CD14-positive monocyte (primary cell): ENCODE measurements at regions of chr17 and their contacts with region 1.

Region 1: DNA sequence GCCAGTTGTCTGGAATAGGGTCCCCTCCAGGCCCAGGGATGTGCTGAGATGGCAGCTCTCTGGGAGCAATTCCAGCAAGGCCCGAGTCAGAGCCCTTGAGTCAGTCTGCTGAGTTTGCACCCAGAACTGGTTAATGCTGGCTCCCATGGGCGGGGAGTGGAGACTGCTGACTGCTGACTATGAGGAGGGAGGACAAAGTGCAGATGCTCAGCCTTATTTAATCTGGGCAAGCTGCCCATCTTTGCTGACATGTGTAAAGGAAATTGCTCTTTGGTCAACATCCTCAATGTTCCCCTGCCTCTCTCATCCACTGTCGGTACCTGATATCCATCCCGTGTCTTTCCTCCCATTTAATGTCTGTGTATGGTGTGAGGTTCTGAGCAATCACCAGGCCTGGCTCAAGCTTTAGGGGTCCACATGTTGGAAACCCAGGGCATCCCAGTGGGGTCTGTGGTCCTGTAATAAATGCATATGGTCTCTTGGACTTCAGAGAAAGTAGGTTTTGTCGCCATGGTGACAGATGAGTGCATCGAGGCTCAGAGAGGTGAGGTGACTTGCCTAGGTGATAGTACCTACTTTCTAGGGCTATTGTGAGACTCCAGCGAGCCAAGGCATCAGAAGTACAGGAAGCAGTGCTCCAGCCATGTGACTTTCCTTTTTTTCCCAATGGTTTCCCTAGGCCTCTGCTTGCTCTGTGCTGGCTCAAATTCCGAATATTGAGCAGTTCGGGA is 20.0 kb upstream of the RNF135 start:
- DNase-seq: peak; percentile 73 to 77 (median 76)
- H3K4me3 ChIP-seq: peak overlapping the region in 1 of 3 experiments; percentile 18
- H3K4me3 Mint-ChIP-seq: peak overlapping the region in 1 of 2 donors; percentile 48
- H3K27ac ChIP-seq: peak overlapping the region; percentile 78 to 80
- H3K27ac Mint-ChIP-seq: peak overlapping the region; percentile 80 to 99 (median 90)
- H3K4me1 ChIP-seq: peaks cover 73% of the 10 kb centered on the region in 2 donors
- H3K4me1 Mint-ChIP-seq: peaks cover 64% of the 10 kb centered on the region
- H3K27me3 ChIP-seq: no peaks in the 10 kb centered on the region
- H3K27me3 Mint-ChIP-seq: peaks cover 0 to 5% (median 2%) of the 10 kb centered on the region in 3 donors
- CTCF ChIP-seq: no peak

Region 2: GRCh38 chr17:30805944-30806456 is 144.8 kb before region 1 on chr17:
- intact Hi-C with region 1: no loop called
- DNase-seq: peak in 1 of 3 donors; percentile 18
- H3K4me3 ChIP-seq: peak overlapping the region in 1 of 3 experiments; percentile 10
- H3K4me3 Mint-ChIP-seq: peak overlapping the region in 1 of 2 donors; percentile 15
- H3K27ac ChIP-seq: peak overlapping the region in 1 of 2 donors; percentile 46
- H3K27ac Mint-ChIP-seq: peak overlapping the region; percentile 26 to 81 (median 67)
- H3K4me1 ChIP-seq: peaks cover 55 to 58% of the 10 kb centered on the region in 2 donors
- H3K4me1 Mint-ChIP-seq: peaks cover 47% of the 10 kb centered on the region
- H3K27me3 ChIP-seq: no peaks in the 10 kb centered on the region
- H3K27me3 Mint-ChIP-seq: peaks cover 0 to 1% (median 0%) of the 10 kb centered on the region in 3 donors
- CTCF ChIP-seq: peak; percentile 71

Region 3: GRCh38 chr17:31052187-31052889 is 101.5 kb after region 1 on chr17:
- intact Hi-C with region 1: loop called in 1 of 2 experiments (anchors 5 kb)
- DNase-seq: peak; percentile 67 to 82 (median 67)
- H3K4me3 ChIP-seq: peak overlapping the region in 1 of 3 experiments; percentile 29
- H3K4me3 Mint-ChIP-seq: peak overlapping the region; percentile 28 to 76
- H3K27ac ChIP-seq: peak overlapping the region; percentile 73 to 92
- H3K27ac Mint-ChIP-seq: peak overlapping the region; percentile 92 to 98 (median 96)
- H3K4me1 ChIP-seq: peaks cover 32 to 33% of the 10 kb centered on the region in 2 donors
- H3K4me1 Mint-ChIP-seq: peaks cover 31% of the 10 kb centered on the region
- H3K27me3 ChIP-seq: no peaks in the 10 kb centered on the region
- H3K27me3 Mint-ChIP-seq: no peaks in the 10 kb centered on the region
- CTCF ChIP-seq: no peak

Region 4: GRCh38 chr17:31231852-31232251 is 281.0 kb after region 1 on chr17:
- intact Hi-C with region 1: no loop called
- DNase-seq: no peak
- H3K4me3 ChIP-seq: no peak overlapping the region
- H3K4me3 Mint-ChIP-seq: no peak overlapping the region
- H3K27ac ChIP-seq: no peak overlapping the region
- H3K27ac Mint-ChIP-seq: no peak overlapping the region
- H3K4me1 ChIP-seq: peaks cover 0 to 3% of the 10 kb centered on the region in 2 donors
- H3K4me1 Mint-ChIP-seq: peaks cover 11% of the 10 kb centered on the region
- H3K27me3 ChIP-seq: no peaks in the 10 kb centered on the region
- H3K27me3 Mint-ChIP-seq: no peaks in the 10 kb centered on the region
- CTCF ChIP-seq: no peak

Region 5: DNA sequence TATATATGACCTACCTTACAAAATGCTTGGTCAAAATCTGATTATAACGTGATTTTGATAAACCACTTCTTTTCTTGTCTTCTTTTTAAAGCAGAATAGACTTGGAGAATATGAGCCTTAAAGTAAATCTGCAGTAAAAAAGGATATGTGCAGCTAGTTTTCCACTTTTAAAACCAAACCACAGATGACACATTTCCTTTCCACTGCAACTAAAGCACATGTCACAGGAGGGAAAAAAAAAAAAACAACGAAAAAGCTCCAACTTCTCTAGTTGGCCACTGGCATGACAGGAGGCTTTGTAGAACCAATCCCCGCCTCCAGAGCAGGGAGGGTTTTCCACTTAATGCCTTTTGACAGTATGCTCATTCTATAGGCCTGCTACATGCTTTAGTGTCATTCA is 370.6 kb after region 1 on chr17 and contains the start of gene EVI2A:
- intact Hi-C with region 1: loop called in 1 of 2 experiments (anchors 10 kb)
- DNase-seq: peak; percentile 88 to 94 (median 92)
- H3K4me3 ChIP-seq: peak within 1 kb of the TSS; percentile 90 to 100 (median 96)
- H3K4me3 Mint-ChIP-seq: peak within 1 kb of the TSS; percentile 72 to 88
- H3K27ac ChIP-seq: peak within 1 kb of the TSS; percentile 29 to 98
- H3K27ac Mint-ChIP-seq: peak within 1 kb of the TSS; percentile 84 to 95 (median 89)
- H3K4me1 ChIP-seq: peaks cover 24 to 40% of the 10 kb centered on the region in 2 donors
- H3K4me1 Mint-ChIP-seq: peaks cover 25% of the 10 kb centered on the region
- H3K27me3 ChIP-seq: no peaks in the 10 kb centered on the region
- H3K27me3 Mint-ChIP-seq: no peaks in the 10 kb centered on the region
- CTCF ChIP-seq: no peak
- polyA plus RNA-seq, gene EVI2A: 121 to 138 (median 125) TPM

Region 6: DNA sequence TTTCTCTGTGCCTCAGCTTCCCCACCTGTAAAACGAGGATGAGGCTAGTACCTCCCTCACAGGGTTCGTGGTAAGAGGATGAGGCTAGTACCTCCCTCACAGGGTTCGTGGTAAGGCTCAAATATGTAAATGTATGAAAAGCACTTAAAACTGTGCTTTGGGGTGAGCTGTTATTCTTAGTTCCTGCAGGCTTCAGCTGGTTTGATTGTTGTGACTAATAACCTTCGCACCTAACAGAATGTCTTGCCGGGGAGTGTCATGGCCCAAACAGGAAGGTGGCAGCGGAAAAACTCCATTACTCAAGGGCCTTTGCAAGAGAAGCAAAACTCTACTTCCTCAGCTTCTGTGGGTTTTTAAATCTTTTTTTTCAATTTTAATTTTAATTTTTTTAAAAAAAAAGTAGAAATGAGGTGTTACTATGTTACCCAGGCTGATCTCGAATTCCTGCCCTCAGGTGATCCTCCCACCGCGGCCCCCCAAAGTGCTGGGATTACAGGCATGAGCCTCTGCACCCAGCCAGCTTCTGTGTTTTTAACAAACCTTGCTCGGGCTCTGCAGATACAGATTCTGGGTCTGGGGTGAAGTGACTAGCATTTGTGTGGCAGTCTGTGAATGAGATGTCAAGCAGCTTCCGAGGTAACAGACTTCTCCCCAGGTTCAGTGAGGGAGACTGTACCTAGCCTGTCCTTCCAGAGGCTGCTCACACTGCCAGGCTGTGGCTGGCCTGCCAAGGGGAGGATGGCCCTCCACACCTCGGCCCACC is 543.6 kb after region 1 on chr17:
- intact Hi-C with region 1: loop called in 1 of 2 experiments (anchors 5 kb)
- DNase-seq: peak; percentile 89 to 92 (median 92)
- H3K4me3 ChIP-seq: peak overlapping the region in 1 of 3 experiments; percentile 70
- H3K4me3 Mint-ChIP-seq: peak overlapping the region; percentile 69 to 88
- H3K27ac ChIP-seq: peak overlapping the region; percentile 92 to 97
- H3K27ac Mint-ChIP-seq: peak overlapping the region; percentile 96 to 99 (median 98)
- H3K4me1 ChIP-seq: peaks cover 64 to 71% of the 10 kb centered on the region in 2 donors
- H3K4me1 Mint-ChIP-seq: peaks cover 66% of the 10 kb centered on the region
- H3K27me3 ChIP-seq: peaks cover 0 to 4% of the 10 kb centered on the region in 2 donors
- H3K27me3 Mint-ChIP-seq: peaks cover 3 to 12% (median 8%) of the 10 kb centered on the region in 3 donors
- CTCF ChIP-seq: no peak